ENCODE measurements at regions of chr12 and their contacts with region 1.

Region 1: DNA sequence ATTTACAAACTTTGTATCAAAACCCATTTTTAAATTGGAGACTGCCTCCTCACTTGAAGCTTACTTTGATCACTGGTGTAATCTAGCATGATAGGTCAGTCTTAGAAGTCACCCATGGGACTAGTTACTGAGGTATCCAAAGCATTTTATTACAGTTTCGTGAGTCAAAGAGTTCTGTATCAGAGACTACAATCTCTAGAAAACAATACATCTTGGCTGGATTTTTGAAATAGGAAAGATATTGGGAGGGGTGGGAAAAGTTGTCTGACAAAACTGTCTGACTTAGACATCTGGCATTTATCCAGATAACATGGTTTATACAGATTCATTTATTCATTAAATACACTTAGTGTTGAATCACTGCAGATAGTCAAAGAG is 173.5 kb upstream of the PDZRN4 start:
- DNase-seq: no peak
- H3K4me3 ChIP-seq: no peak overlapping the region
- H3K27ac ChIP-seq: no peak overlapping the region
- H3K4me1 ChIP-seq: no peaks in the 10 kb centered on the region
- H3K27me3 ChIP-seq: no peaks in the 10 kb centered on the region
- CTCF ChIP-seq: no peak
- EP300 ChIP-seq: no peak
- POLR2A ChIP-seq: no peak

Region 2: DNA sequence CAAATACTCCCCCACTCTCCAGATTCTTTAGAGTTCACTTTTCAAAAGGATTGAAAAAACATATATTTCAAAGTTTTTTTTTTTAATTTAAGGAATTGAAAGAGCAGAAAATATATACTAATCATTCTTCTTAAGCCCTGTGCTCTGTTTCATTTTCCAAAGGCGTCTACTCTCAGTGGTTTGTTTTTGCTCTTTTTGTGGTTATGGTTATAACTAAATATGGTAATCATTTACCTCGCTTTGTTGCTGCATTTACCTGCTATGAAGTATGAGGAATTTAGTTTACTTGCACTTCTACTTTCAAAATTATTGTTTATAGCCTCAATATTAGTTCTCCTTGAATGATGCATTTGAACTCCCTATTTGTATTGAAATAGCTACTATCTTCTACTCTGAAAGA is 845.8 kb before region 1 on chr12:
- in situ Hi-C with region 1: no loop called
- intact Hi-C with region 1: no loop called
- DNase-seq: no peak
- H3K4me3 ChIP-seq: no peak overlapping the region
- H3K27ac ChIP-seq: no peak overlapping the region
- H3K4me1 ChIP-seq: no peaks in the 10 kb centered on the region
- H3K27me3 ChIP-seq: no peaks in the 10 kb centered on the region
- CTCF ChIP-seq: no peak
- EP300 ChIP-seq: no peak
- POLR2A ChIP-seq: no peak

Region 3: DNA sequence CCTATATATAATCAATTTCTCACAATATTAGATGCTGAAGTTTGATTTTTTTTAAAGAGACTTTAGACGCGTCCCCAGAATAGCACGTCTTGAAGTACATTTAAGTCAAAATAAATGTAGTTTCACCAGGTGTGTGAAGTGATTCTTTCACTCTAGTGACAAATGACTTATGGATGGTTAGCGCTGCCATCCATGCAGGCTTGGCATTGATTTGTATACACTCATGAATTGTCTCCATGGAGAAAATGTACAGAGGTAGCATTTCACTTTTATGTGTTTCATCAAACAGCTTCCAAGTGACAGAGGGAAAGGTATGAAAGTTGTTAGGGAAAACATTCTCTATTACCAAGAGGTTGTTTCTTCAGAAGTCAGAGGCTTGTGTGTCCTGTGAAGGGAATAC is 534.3 kb after region 1 on chr12:
- in situ Hi-C with region 1: no loop called
- intact Hi-C with region 1: loop called (anchors 5 kb)
- DNase-seq: no peak
- H3K4me3 ChIP-seq: no peak overlapping the region
- H3K27ac ChIP-seq: no peak overlapping the region
- H3K4me1 ChIP-seq: no peaks in the 10 kb centered on the region
- H3K27me3 ChIP-seq: no peaks in the 10 kb centered on the region
- CTCF ChIP-seq: no peak
- EP300 ChIP-seq: no peak
- POLR2A ChIP-seq: no peak

Region 4: DNA sequence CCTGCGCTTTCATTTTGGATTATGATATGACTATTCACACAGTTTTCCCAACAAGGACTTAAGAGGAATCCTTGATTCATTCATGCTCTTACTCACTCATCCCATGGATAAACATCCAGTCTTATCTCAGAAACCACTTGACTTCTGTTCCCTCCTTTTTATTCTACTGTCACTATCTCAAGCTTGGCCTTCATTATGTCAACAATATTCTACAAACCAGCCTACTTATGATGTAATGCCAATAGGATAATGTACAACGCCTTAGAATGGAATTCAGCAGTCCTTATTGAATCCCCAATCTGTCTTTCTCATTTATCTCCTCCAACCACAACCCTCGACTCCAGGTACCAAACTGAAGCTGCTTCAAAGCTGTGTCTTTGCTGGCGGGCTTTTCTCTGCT is 622.0 kb after region 1 on chr12:
- in situ Hi-C with region 1: no loop called
- intact Hi-C with region 1: no loop called
- DNase-seq: no peak
- H3K4me3 ChIP-seq: no peak overlapping the region
- H3K27ac ChIP-seq: no peak overlapping the region
- H3K4me1 ChIP-seq: no peaks in the 10 kb centered on the region
- H3K27me3 ChIP-seq: no peaks in the 10 kb centered on the region
- CTCF ChIP-seq: no peak
- EP300 ChIP-seq: no peak
- POLR2A ChIP-seq: no peak